Naive thymus-derived CD4-positive, alpha-beta T cell (primary cell): ENCODE measurements at regions of chrX and their contacts with region 1.

Region 1: DNA sequence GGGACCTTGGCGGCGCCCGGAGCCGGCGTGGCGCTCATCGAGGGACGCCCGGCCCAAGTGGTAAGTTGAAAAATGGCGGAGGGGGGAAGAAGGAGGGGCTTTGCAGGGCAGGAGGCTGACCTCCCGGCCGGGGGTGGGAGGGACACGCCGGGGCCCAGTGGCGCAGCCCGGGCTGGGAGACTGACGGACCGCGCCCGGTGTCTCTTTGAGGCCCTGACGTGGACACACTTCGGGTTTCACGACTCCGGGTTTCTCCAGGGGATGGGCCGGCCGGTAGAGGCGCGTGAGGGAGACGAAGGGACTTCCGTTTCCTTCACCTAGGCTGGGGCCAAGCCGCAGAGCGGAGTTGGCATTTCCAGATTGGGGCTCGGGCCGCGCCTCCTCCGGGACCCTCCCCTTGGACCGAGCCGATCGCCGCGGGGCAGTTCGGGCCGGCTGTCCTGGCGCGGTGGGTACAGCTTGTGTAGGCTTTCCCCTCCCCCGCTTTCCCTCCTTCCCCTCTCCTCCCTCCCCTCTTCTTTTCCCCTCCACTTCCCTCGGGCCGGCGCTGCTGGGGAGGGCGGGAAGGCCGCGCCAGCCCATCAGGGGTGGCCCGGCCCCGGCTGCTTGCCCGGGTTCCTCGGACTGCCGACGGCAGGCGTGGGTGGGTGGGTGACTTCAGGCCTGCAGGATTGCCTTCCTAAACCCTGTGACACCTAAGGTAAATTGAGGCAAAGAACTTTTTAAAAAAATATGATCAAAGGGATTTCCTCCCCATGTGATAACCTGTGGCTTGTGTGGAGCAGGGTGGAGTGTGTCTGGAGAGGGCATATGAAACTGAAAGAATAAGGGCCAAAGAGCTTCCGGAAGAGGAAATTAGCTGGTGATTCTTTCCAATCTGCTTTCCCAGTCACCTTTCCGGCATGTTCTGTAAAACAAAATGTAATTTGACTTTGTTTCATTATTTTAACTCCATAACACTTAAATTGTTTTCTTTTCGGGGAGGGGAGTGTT is at the start of gene XIAP:
- DNase-seq: peak; percentile 48 to 70 (median 62)
- ATAC-seq: peak; percentile 91
- H3K4me3 ChIP-seq: peak within 1 kb of the TSS; percentile 74
- H3K4me3 Mint-ChIP-seq: peak within 1 kb of the TSS; percentile 83 to 94 (median 90)
- H3K27ac ChIP-seq: peak within 1 kb of the TSS; percentile 93
- H3K27ac Mint-ChIP-seq: peak within 1 kb of the TSS; percentile 85 to 98 (median 94)
- H3K4me1 ChIP-seq: no peaks in the 10 kb centered on the region
- H3K4me1 Mint-ChIP-seq: peaks cover 10 to 29% (median 24%) of the 10 kb centered on the region in 7 donors
- H3K27me3 ChIP-seq: no peaks in the 10 kb centered on the region
- H3K27me3 Mint-ChIP-seq: no peaks in the 10 kb centered on the region
- total RNA-seq, gene XIAP: 23.5 to 56.1 (median 49.3) TPM

Region 2: DNA sequence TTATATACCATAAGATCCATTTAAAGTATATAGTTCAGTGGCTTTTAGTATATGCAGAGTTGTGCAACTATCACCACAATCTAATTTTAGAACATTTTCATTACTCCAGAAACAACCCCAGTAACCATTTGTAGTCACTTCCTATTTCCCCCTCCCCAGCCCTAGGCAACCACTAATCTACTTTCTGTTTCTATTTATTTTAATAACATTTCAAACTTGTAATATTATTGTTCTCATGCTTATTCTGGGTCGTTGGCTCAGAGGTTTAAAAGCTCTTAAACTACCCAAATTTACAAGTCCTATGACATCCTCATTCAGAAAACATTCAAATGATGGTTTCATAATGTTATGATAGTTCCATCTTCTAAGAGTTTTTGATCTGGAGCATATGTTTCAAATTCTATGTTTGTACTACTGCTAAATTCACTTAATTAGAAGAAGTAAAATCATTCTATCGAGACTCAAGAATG is 18.1 kb after region 1 on chrX:
- CTCF ChIA-PET with region 1: interaction called, 3 read pairs
- POLR2A ChIA-PET with region 1: no interaction called
- intact Hi-C with region 1: loop called in 1 of 2 experiments (anchors 2 kb)
- DNase-seq: peak in 2 of 9 donors; percentile 18 to 22
- ATAC-seq: peak; percentile 58
- H3K4me3 ChIP-seq: no peak overlapping the region
- H3K4me3 Mint-ChIP-seq: peak overlapping the region in 9 of 10 donors; percentile 12 to 78 (median 57)
- H3K27ac ChIP-seq: peak overlapping the region; percentile 44
- H3K27ac Mint-ChIP-seq: peak overlapping the region; percentile 29 to 84 (median 68)
- H3K4me1 ChIP-seq: peaks cover 7 to 9% of the 10 kb centered on the region in 2 donors
- H3K4me1 Mint-ChIP-seq: peaks cover 6 to 37% (median 23%) of the 10 kb centered on the region in 7 donors
- H3K27me3 ChIP-seq: no peaks in the 10 kb centered on the region
- H3K27me3 Mint-ChIP-seq: no peaks in the 10 kb centered on the region

Region 3: DNA sequence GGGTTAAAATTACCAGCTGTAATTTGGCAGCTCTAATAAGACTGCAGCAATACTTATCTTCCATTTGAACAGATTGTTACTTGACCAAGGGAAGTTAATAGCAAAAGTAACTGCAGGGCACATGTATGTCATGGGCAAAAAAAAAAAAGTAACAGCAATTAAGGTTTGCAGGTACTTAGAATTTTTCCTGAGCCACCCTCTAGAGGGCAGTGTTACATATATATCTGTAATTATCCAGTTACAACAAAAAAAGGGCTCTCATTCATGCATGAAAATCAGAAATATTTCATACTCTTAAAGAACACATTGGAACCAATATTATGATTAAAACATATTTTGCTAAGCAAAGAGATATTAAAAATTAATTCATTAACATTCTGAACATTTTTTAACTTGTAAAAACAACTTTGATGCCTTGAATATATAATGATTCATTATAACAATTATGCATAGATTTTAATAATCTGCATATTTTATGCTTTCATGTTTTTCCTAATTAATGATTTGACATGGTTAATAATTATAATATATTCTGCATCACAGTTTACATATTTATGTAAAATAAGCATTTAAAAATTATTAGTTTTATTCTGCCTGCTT is 24.8 kb after region 1 on chrX:
- CTCF ChIA-PET with region 1: no interaction called
- POLR2A ChIA-PET with region 1: no interaction called
- intact Hi-C with region 1: loop called in 1 of 2 experiments (anchors 1 kb)
- DNase-seq: peak in 7 of 9 donors; percentile 16 to 55 (median 45)
- ATAC-seq: peak; percentile 77
- H3K4me3 ChIP-seq: no peak overlapping the region
- H3K4me3 Mint-ChIP-seq: no peak overlapping the region
- H3K27ac ChIP-seq: no peak overlapping the region
- H3K27ac Mint-ChIP-seq: no peak overlapping the region
- H3K4me1 ChIP-seq: no peaks in the 10 kb centered on the region
- H3K4me1 Mint-ChIP-seq: peaks cover 6 to 14% (median 10%) of the 10 kb centered on the region in 7 donors
- H3K27me3 ChIP-seq: no peaks in the 10 kb centered on the region
- H3K27me3 Mint-ChIP-seq: no peaks in the 10 kb centered on the region

Region 4: GRCh38 chrX:124086411-124086810 is 226.3 kb after region 1 on chrX:
- CTCF ChIA-PET with region 1: no interaction called
- POLR2A ChIA-PET with region 1: no interaction called
- intact Hi-C with region 1: loop called in 1 of 2 experiments (anchors 1 kb)
- DNase-seq: peak in 8 of 9 donors; percentile 21 to 78 (median 64)
- ATAC-seq: peak; percentile 97
- H3K4me3 ChIP-seq: no peak overlapping the region
- H3K4me3 Mint-ChIP-seq: peak overlapping the region in 9 of 10 donors; percentile 4 to 84 (median 68)
- H3K27ac ChIP-seq: peak overlapping the region; percentile 59
- H3K27ac Mint-ChIP-seq: peak overlapping the region; percentile 85 to 94 (median 91)
- H3K4me1 ChIP-seq: peaks cover 0 to 6% of the 10 kb centered on the region in 2 donors
- H3K4me1 Mint-ChIP-seq: peaks cover 7 to 41% (median 31%) of the 10 kb centered on the region in 7 donors
- H3K27me3 ChIP-seq: no peaks in the 10 kb centered on the region
- H3K27me3 Mint-ChIP-seq: no peaks in the 10 kb centered on the region